GM12878 (cell line): ENCODE measurements at regions of chr3 and their contacts with region 1.

Region 1: GRCh38 chr3:101849051-101849720 is at the start of gene NFKBIZ:
- DNase-seq: no peak
- ATAC-seq: peak; percentile 78
- H3K4me3 ChIP-seq: peak within 1 kb of the TSS; percentile 75
- H3K27ac ChIP-seq: peak within 1 kb of the TSS; percentile 93
- H3K4me1 ChIP-seq: peaks cover 16% of the 10 kb centered on the region
- H3K27me3 ChIP-seq: no peaks in the 10 kb centered on the region
- CTCF ChIP-seq: no peak
- EP300 ChIP-seq: no peak
- POLR2A ChIP-seq: peak; percentile 95
- RAD21 ChIP-seq: no peak
- polyA plus RNA-seq, gene NFKBIZ: 6.3 to 8.9 TPM

Region 2: GRCh38 chr3:101735833-101736232 is 113.4 kb before region 1 on chr3:
- CTCF ChIA-PET with region 1: no interaction called
- POLR2A ChIA-PET with region 1: no interaction called
- RAD21 ChIA-PET with region 1: no interaction called
- SMC1A ChIA-PET with region 1: no interaction called
- in situ Hi-C with region 1: no loop called
- intact Hi-C with region 1: no loop called
- DNase-seq: no peak
- ATAC-seq: no peak
- H3K4me3 ChIP-seq: no peak overlapping the region
- H3K27ac ChIP-seq: no peak overlapping the region
- H3K4me1 ChIP-seq: no peaks in the 10 kb centered on the region
- H3K27me3 ChIP-seq: no peaks in the 10 kb centered on the region
- CTCF ChIP-seq: no peak
- EP300 ChIP-seq: no peak
- POLR2A ChIP-seq: no peak
- RAD21 ChIP-seq: no peak

Region 3: GRCh38 chr3:101827211-101828174 is 21.7 kb before region 1 on chr3:
- CTCF ChIA-PET with region 1: interaction called, 9 read pairs
- POLR2A ChIA-PET with region 1: interaction called, 66 read pairs
- RAD21 ChIA-PET with region 1: interaction called, 44 read pairs
- SMC1A ChIA-PET with region 1: interaction called, 61 read pairs
- in situ Hi-C with region 1: no loop called
- intact Hi-C with region 1: loop called (anchors 1 kb)
- DNase-seq: peak; percentile 93
- ATAC-seq: peak; percentile 83
- H3K4me3 ChIP-seq: peak overlapping the region; percentile 78
- H3K27ac ChIP-seq: peak overlapping the region; percentile 92
- H3K4me1 ChIP-seq: peaks cover 11% of the 10 kb centered on the region
- H3K27me3 ChIP-seq: no peaks in the 10 kb centered on the region
- CTCF ChIP-seq: no peak
- EP300 ChIP-seq: peak; percentile 36 to 84
- POLR2A ChIP-seq: peak; percentile 92
- RAD21 ChIP-seq: peak; percentile 38; the same call in 1 of the 2 replicates

Region 4: DNA sequence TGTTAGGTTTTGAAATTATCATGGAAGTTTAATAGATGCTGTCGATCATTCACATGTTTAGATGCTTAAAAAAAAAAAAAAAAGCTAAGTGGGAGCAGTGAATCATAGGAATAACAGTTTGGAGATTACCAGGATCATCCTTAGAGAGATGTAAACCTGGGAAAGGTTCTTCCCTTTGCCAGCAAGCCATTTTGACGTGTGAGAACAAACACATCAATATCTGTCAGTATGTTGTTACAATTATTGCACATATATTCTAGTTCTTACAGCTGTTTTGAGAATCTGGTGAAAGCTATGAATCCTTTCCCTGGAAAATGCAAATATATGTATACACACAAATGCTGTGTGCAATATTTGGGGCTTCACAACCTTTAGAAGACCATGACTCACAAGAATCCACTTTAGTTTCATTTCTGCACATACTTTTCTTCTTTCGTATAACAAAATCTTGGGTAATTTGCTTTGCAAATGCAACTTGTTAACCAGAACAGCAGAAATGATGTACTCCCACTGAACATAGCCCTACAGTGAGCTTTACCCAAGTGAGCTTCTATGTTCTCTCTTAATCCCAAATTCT is 12.1 kb after region 1 on chr3:
- CTCF ChIA-PET with region 1: interaction called, 3 read pairs
- POLR2A ChIA-PET with region 1: interaction called, 5 read pairs
- RAD21 ChIA-PET with region 1: interaction called, 12 read pairs
- SMC1A ChIA-PET with region 1: interaction called, 8 read pairs
- in situ Hi-C with region 1: no loop called
- intact Hi-C with region 1: no loop called
- DNase-seq: no peak
- ATAC-seq: peak; percentile 32
- H3K4me3 ChIP-seq: no peak overlapping the region
- H3K27ac ChIP-seq: no peak overlapping the region
- H3K4me1 ChIP-seq: peaks cover 9% of the 10 kb centered on the region
- H3K27me3 ChIP-seq: no peaks in the 10 kb centered on the region
- CTCF ChIP-seq: no peak
- EP300 ChIP-seq: no peak
- POLR2A ChIP-seq: no peak
- RAD21 ChIP-seq: no peak

Region 5: GRCh38 chr3:101950510-101950909 is 101.3 kb after region 1 on chr3:
- CTCF ChIA-PET with region 1: interaction called, 3 read pairs
- POLR2A ChIA-PET with region 1: no interaction called
- RAD21 ChIA-PET with region 1: interaction called, 10 read pairs
- SMC1A ChIA-PET with region 1: interaction called, 13 read pairs
- in situ Hi-C with region 1: no loop called
- intact Hi-C with region 1: no loop called
- DNase-seq: peak; percentile 87
- ATAC-seq: peak; percentile 92
- H3K4me3 ChIP-seq: no peak overlapping the region
- H3K27ac ChIP-seq: no peak overlapping the region
- H3K4me1 ChIP-seq: no peaks in the 10 kb centered on the region
- H3K27me3 ChIP-seq: no peaks in the 10 kb centered on the region
- CTCF ChIP-seq: no peak
- EP300 ChIP-seq: peak in 1 of 2 experiments; percentile 49; a peak in 1 of 4 replicates
- POLR2A ChIP-seq: no peak
- RAD21 ChIP-seq: no peak